ENCODE measurements at regions of chr17 and their contacts with region 1.

Region 1: GRCh38 chr17:47663912-47664625 is 14.3 kb downstream of the KPNB1 start:
- DNase-seq: peak; percentile 82
- ATAC-seq: peak; percentile 70
- H3K4me3 ChIP-seq: peak overlapping the region; percentile 25 to 53 (median 40)
- H3K4me3 Mint-ChIP-seq: peak overlapping the region; percentile 82
- H3K27ac ChIP-seq: peak overlapping the region; percentile 62 to 72
- H3K27ac Mint-ChIP-seq: peak overlapping the region; percentile 87
- H3K4me1 ChIP-seq: peaks cover 28 to 39% of the 10 kb centered on the region in 2 donors
- H3K4me1 Mint-ChIP-seq: peaks cover 30% of the 10 kb centered on the region
- H3K27me3 ChIP-seq: no peaks in the 10 kb centered on the region
- H3K27me3 Mint-ChIP-seq: no peaks in the 10 kb centered on the region
- CTCF ChIP-seq: peak; percentile 92

Region 2: DNA sequence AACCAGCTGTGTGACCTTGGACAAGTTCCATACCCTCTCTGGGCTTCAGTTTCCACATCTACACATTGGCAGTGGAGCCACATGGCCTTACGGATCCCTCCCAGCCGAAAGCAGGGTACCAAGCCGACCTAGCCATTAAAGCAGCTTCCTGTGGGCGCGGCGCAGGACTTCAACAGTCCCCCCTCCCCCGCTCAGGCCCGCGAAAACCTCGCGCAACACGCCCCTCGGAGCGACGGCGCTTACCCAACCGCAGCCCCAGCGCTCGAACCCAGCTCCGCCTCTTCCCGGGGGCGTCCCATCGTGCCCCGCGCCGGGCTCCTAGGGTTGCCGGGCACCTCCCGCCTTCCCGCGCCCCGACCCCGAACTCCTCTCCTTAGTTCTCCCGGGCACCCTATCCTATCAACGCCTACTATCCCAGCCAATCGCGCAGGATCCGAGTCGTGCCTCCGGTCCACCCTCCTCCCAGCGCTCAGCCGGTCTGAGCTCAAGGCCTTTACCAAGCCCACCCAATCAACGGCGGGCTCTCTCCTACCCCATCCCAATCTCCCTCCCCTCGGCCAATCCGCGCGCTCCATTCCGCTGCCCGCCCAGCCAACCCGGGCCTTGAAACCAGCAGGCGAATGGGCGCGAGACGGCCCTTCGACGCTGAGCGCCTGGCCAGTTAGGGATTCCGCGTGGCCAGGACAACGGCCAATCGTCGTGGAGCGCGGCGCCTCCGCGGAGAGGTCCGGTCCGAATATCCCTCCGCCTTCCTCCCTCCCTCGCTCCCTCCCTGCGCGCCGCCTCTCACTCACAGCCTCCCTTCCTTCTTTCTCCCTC is 14.7 kb before region 1 on chr17 and contains the start of gene KPNB1:
- CTCF ChIA-PET with region 1: interaction called, 108 read pairs
- POLR2A ChIA-PET with region 1: interaction called, 39 read pairs
- intact Hi-C with region 1: loop called (anchors 1 kb)
- DNase-seq: peak; percentile 99
- ATAC-seq: peak; percentile 79
- H3K4me3 ChIP-seq: peak within 1 kb of the TSS; percentile 76 to 93 (median 83)
- H3K4me3 Mint-ChIP-seq: peak within 1 kb of the TSS; percentile 98
- H3K27ac ChIP-seq: peak within 1 kb of the TSS; percentile 76 to 84
- H3K27ac Mint-ChIP-seq: peak within 1 kb of the TSS; percentile 98
- H3K4me1 ChIP-seq: peaks cover 32% of the 10 kb centered on the region in 2 donors
- H3K4me1 Mint-ChIP-seq: peaks cover 44% of the 10 kb centered on the region
- H3K27me3 ChIP-seq: no peaks in the 10 kb centered on the region
- H3K27me3 Mint-ChIP-seq: no peaks in the 10 kb centered on the region
- CTCF ChIP-seq: no peak
- total RNA-seq, gene KPNB1: 269 and 278 TPM in 2 replicates

Region 3: DNA sequence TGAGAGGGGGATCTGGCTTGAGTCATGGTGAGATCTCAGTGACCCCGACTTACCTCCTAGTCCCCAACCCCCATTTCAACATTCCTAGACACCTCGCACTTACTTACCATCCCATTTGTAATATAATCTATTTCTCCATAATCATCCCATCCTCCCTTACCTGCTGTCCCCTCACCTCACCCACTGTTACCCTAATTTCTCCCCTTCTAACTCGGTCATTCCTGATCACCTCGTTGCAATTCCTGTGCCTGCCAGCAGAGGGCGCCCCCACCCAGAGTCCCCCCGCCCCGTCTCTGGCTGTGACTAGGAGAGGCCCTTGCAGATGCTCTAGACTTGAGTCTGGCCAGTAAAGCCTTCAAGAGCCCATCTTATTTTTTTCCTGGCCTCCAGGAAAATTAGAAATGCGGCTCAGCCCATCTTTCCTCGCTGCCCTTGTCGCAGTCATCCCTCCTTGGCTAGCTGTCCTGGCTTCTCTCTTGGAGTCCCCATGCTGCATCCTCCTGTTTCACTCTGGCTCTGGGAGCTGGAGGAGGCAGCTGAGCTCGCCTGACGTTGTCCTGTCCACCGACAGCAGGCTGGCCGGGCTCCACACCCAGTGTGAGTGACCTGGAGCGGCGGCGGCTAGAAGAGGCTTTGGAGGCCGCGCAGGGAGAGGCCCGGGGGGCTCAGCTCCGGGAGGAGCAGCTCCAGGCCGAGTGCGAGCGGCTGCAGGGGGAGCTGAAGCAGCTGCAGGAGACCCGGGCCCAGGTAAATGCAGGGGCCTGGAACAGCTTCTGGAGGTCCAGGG is 34.9 kb after region 1 on chr17:
- CTCF ChIA-PET with region 1: interaction called, 7 read pairs
- POLR2A ChIA-PET with region 1: interaction called, 4 read pairs
- intact Hi-C with region 1: loop called (anchors 2 kb)
- DNase-seq: peak; percentile 79
- ATAC-seq: peak; percentile 49
- H3K4me3 ChIP-seq: no peak overlapping the region
- H3K4me3 Mint-ChIP-seq: no peak overlapping the region
- H3K27ac ChIP-seq: no peak overlapping the region
- H3K27ac Mint-ChIP-seq: peak overlapping the region; percentile 15
- H3K4me1 ChIP-seq: peaks cover 25 to 61% of the 10 kb centered on the region in 2 donors
- H3K4me1 Mint-ChIP-seq: peaks cover 48% of the 10 kb centered on the region
- H3K27me3 ChIP-seq: no peaks in the 10 kb centered on the region
- H3K27me3 Mint-ChIP-seq: no peaks in the 10 kb centered on the region
- CTCF ChIP-seq: peak; percentile 99

Region 4: GRCh38 chr17:47733047-47733673 is 69.1 kb after region 1 on chr17 and contains the start of gene TBX21:
- CTCF ChIA-PET with region 1: interaction called, 20 read pairs
- POLR2A ChIA-PET with region 1: interaction called, 5 read pairs
- intact Hi-C with region 1: loop called (anchors 2 kb)
- DNase-seq: peak; percentile 94
- ATAC-seq: peak; percentile 90
- H3K4me3 ChIP-seq: peak within 1 kb of the TSS; percentile 51 to 73 (median 60)
- H3K4me3 Mint-ChIP-seq: peak within 1 kb of the TSS; percentile 98
- H3K27ac ChIP-seq: peak within 1 kb of the TSS; percentile 35 to 50
- H3K27ac Mint-ChIP-seq: peak within 1 kb of the TSS; percentile 95
- H3K4me1 ChIP-seq: peaks cover 31 to 44% of the 10 kb centered on the region in 2 donors
- H3K4me1 Mint-ChIP-seq: peaks cover 54% of the 10 kb centered on the region
- H3K27me3 ChIP-seq: peaks cover 0 to 7% (median 2%) of the 10 kb centered on the region in 4 experiments
- H3K27me3 Mint-ChIP-seq: no peaks in the 10 kb centered on the region
- CTCF ChIP-seq: peak; percentile 56
- total RNA-seq, gene TBX21: 8.4 and 10.8 TPM in 2 replicates

Region 5: GRCh38 chr17:47776330-47777197 is 112.5 kb after region 1 on chr17:
- CTCF ChIA-PET with region 1: interaction called, 5 read pairs
- POLR2A ChIA-PET with region 1: no interaction called
- intact Hi-C with region 1: loop called (anchors 1 kb)
- DNase-seq: peak; percentile 66
- ATAC-seq: peak; percentile 65
- H3K4me3 ChIP-seq: no peak overlapping the region
- H3K4me3 Mint-ChIP-seq: no peak overlapping the region
- H3K27ac ChIP-seq: no peak overlapping the region
- H3K27ac Mint-ChIP-seq: no peak overlapping the region
- H3K4me1 ChIP-seq: no peaks in the 10 kb centered on the region
- H3K4me1 Mint-ChIP-seq: no peaks in the 10 kb centered on the region
- H3K27me3 ChIP-seq: peaks cover 0 to 48% (median 25%) of the 10 kb centered on the region in 4 experiments
- H3K27me3 Mint-ChIP-seq: peaks cover 57% of the 10 kb centered on the region
- CTCF ChIP-seq: peak; percentile 84